Activated CD4-positive, alpha-beta T cell treated with anti-CD3 and anti-CD28 coated beads, Interleukin-2, amount 10 ng/mL, durations not matched to agents 24 days and 14 days (primary cell): ENCODE measurements at regions of chr15 and their contacts with region 1.

Region 1: GRCh38 chr15:83571820-83572707 is 81.9 kb upstream of the ADAMTSL3 start:
- DNase-seq: no peak
- H3K4me3 Mint-ChIP-seq: no peak overlapping the region
- H3K27ac Mint-ChIP-seq: no peak overlapping the region
- H3K4me1 Mint-ChIP-seq: no peaks in the 10 kb centered on the region
- H3K27me3 Mint-ChIP-seq: no peaks in the 10 kb centered on the region

Region 2: GRCh38 chr15:83549623-83550022 is 22.4 kb before region 1 on chr15:
- intact Hi-C with region 1: no loop called
- DNase-seq: no peak
- H3K4me3 Mint-ChIP-seq: no peak overlapping the region
- H3K27ac Mint-ChIP-seq: no peak overlapping the region
- H3K4me1 Mint-ChIP-seq: no peaks in the 10 kb centered on the region
- H3K27me3 Mint-ChIP-seq: peaks cover 10% of the 10 kb centered on the region

Region 3: GRCh38 chr15:84023636-84024035 is 451.6 kb after region 1 on chr15:
- intact Hi-C with region 1: loop called (anchors 5 kb)
- DNase-seq: peak; percentile 72
- H3K4me3 Mint-ChIP-seq: no peak overlapping the region
- H3K27ac Mint-ChIP-seq: no peak overlapping the region
- H3K4me1 Mint-ChIP-seq: no peaks in the 10 kb centered on the region
- H3K27me3 Mint-ChIP-seq: peaks cover 3% of the 10 kb centered on the region

Region 4: DNA sequence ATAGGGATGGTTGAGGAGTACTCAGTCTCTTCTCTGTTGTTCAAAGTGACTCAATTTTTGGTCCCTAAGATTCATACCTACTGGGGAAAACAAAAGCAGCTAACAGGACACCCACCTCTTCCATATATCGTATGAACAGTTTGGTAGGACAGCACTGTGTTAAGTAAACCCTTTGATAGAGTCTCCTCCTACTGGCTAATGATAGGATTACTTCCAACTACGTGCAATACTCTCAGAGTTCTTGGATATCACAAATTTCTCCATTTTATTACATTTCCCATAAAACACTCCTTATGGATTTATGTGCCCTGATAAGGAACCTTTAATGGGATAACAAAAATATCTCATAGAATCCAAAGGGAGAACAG is 463.3 kb after region 1 on chr15:
- intact Hi-C with region 1: loop called (anchors 5 kb)
- DNase-seq: no peak
- H3K4me3 Mint-ChIP-seq: no peak overlapping the region
- H3K27ac Mint-ChIP-seq: no peak overlapping the region
- H3K4me1 Mint-ChIP-seq: no peaks in the 10 kb centered on the region
- H3K27me3 Mint-ChIP-seq: peaks cover 2% of the 10 kb centered on the region